GM13976 (cell line): ENCODE measurements at regions of chr1 and their contacts with region 1.

Region 1: GRCh38 chr1:176559878-176560277 is 96.9 kb downstream of the PAPPA2 start:
- DNase-seq: peak; percentile 56
- CTCF ChIP-seq: peak; percentile 45

Region 2: GRCh38 chr1:176199707-176200106 is 360.2 kb before region 1 on chr1:
- in situ Hi-C with region 1: no loop called
- DNase-seq: no peak
- CTCF ChIP-seq: no peak

Region 3: DNA sequence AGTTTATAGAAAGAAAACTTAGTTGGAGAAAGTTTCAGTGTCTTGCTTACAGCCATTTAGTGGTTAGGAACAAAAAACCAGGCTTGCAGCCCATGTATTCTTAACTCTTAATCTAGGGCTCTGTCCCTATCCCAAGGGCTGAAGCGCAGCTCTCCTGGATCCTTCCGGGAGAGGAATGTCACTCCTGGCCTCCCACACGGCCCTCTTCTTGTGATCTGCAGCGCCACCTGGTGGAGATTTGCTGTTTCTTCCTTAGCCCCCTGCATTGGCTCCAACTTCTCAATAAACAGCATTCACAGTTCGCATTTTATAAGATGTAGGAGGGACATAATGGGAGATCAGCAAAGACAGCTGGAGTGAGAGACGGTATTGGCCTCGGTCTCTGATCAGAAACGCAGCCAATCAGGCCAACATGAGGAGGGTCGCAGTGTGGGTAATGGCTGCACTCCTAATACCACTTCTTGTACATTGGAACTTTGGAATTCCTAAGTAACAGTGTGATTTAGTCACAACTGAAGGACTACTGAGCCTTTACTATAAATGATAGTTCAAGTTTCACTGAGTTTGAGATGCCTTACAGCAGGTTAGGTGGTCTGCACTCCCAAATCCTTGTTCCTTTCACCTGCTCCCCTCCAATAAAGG is 321.2 kb after region 1 on chr1:
- in situ Hi-C with region 1: loop called (anchors 5 kb)
- DNase-seq: peak; percentile 62
- CTCF ChIP-seq: peak; percentile 67

Region 4: DNA sequence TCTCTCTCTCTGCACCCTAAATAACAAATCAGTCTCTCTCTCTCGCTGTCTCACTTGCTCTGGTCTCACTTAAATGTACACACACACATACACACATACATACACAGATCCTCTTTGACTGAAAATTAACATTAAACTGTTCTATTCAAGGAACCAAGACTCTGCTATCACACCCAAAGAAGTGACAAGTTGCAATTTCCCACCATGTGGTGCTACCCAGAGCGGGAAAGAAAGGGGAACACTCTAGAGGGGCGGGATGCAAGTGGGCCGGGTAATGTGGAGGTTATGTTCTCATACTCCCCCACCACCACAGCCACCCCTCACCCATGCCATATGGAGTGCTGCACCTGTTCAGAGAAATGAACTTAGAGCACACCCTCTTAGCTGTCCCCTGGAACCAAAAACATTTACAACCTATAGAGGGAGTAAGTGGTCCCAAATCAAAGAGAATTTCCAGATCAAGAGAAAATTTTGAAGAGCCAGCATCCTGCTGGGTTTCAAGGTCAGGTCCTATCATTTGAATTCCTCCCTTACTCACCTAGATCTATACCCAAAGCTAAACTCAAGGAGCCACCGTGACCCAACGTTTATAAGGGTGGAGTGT is 930.3 kb after region 1 on chr1:
- in situ Hi-C with region 1: no loop called
- DNase-seq: no peak
- CTCF ChIP-seq: no peak